AG04449 (cell line): ENCODE measurements at regions of chr1 and their contacts with region 1.

Region 1: DNA sequence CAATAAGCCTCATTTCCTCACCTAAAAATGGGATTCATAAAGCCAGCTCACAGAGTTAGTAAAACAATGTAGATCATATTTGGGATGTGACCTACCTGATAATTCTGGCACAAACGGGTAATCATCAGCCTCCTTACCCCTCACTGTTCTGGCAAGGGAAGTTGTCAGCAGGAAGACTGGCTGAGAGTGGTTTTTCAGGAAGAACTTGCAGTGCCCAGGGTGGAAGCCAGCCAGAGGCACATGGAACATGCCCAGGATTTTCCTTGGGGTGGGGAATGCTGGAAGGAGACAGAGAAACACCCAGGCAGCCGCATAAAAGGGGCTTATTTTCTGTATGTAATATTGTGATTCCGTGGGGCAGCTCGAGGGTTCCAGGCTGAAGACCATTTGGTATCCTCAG is 7.7 kb upstream of the SLC5A9 start:
- DNase-seq: no peak
- H3K4me3 ChIP-seq: no peak overlapping the region
- CTCF ChIP-seq: no peak

Region 2: DNA sequence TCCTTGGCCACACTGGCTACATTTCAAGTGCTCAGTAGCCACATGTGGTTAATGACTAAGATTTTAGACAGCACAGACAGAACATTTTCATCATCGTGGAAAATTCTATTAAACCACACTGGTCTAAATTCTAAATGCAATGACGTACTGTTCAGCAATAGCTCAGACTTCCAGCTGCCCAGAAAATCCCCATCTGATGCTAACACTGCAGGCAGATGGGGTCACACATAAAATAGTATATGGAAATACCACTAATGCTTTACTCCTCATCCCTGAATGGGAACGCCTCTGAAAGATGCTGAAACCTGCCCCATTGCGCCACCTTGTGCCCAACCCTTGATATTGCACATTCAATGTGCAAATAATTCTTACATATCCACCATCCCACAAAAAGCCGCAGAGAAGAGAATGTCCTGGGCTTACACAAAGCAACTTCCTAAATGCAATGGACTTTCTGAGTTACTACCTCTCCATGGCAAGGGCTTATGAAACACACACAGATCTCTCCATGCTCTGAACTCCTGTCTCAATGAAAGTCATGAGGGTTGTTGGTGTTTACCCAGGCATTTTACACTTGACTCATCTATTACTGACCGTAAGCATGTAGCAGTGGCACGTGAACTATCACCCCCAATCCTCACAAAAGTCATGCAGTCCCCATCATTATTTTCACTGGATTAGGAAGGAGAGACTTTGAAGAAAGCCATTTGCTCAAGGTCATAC is 12.6 kb before region 1 on chr1:
- CTCF ChIA-PET with region 1: interaction called, 13 read pairs
- POLR2A ChIA-PET with region 1: no interaction called
- DNase-seq: peak; percentile 51
- H3K4me3 ChIP-seq: no peak overlapping the region
- CTCF ChIP-seq: peak; percentile 77